Natural killer cell (primary cell): ENCODE measurements at regions of chr7 and their contacts with region 1.

Region 1: GRCh38 chr7:74094224-74095101 is 10.9 kb downstream of the LIMK1 start:
- DNase-seq: peak; percentile 81 to 85
- ATAC-seq: peak; percentile 74 to 90 (median 82)
- H3K4me3 ChIP-seq: peak overlapping the region; percentile 51
- H3K4me3 Mint-ChIP-seq: peak overlapping the region; percentile 89
- H3K27ac ChIP-seq: peak overlapping the region; percentile 99
- H3K27ac Mint-ChIP-seq: peak overlapping the region; percentile 98 to 99
- H3K4me1 ChIP-seq: peaks cover 46% of the 10 kb centered on the region
- H3K4me1 Mint-ChIP-seq: peaks cover 13 to 47% of the 10 kb centered on the region in 2 donors
- H3K27me3 ChIP-seq: no peaks in the 10 kb centered on the region
- H3K27me3 Mint-ChIP-seq: no peaks in the 10 kb centered on the region
- CTCF ChIP-seq: no peak

Region 2: DNA sequence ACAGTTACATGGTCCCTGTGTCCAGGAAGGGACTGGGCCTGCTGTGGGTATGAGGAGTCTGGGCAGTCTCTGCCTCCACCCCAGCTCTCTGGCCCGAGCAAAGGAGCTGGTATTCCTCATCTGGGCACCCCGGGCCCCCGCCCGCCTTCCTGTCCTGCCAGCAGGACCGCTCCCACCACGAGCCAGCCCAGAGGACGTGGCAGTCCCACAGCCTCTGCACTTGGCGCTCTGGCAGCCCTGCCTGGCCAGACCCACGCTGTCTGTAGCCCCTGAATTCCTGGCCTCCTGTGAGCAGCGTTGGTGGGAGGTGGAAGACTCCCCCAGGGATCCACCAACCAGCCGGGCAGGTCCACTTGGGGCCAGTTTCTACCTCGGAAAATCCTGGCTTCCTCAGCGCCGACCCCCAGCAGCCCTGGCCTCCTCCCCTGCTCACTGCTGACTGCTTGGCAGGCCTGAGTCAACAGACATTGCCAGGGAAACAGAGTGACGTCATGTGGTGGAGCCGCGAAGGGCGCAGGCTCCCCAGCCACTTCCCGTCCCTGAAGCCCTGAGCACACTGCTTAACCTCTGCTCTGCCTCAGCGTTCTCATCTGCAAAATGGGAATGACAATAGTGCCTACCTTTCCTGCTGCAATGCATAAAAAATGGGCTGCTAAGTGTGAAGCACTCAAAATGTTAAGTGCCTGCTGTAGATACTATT is 32.5 kb before region 1 on chr7:
- intact Hi-C with region 1: loop called (anchors 1 kb)
- DNase-seq: peak; percentile 84 to 86
- ATAC-seq: peak; percentile 95 to 99 (median 95)
- H3K4me3 ChIP-seq: peak overlapping the region; percentile 21
- H3K4me3 Mint-ChIP-seq: peak overlapping the region; percentile 86
- H3K27ac ChIP-seq: peak overlapping the region; percentile 91
- H3K27ac Mint-ChIP-seq: peak overlapping the region; percentile 99 to 100
- H3K4me1 ChIP-seq: peaks cover 21% of the 10 kb centered on the region
- H3K4me1 Mint-ChIP-seq: peaks cover 8 to 18% of the 10 kb centered on the region in 2 donors
- H3K27me3 ChIP-seq: no peaks in the 10 kb centered on the region
- H3K27me3 Mint-ChIP-seq: peaks cover 0 to 3% of the 10 kb centered on the region in 2 donors
- CTCF ChIP-seq: no peak

Region 3: GRCh38 chr7:74083117-74083876 is 11.2 kb before region 1 on chr7 and contains the start of gene LIMK1:
- intact Hi-C with region 1: loop called (anchors 1 kb)
- DNase-seq: peak; percentile 84 to 91
- ATAC-seq: peak; percentile 96 to 99 (median 97)
- H3K4me3 ChIP-seq: peak within 1 kb of the TSS; percentile 56
- H3K4me3 Mint-ChIP-seq: peak within 1 kb of the TSS; percentile 83
- H3K27ac ChIP-seq: no peak within 1 kb of the TSS
- H3K27ac Mint-ChIP-seq: peak within 1 kb of the TSS; percentile 23 to 86
- H3K4me1 ChIP-seq: peaks cover 17% of the 10 kb centered on the region
- H3K4me1 Mint-ChIP-seq: peaks cover 11 to 17% of the 10 kb centered on the region in 2 donors
- H3K27me3 ChIP-seq: no peaks in the 10 kb centered on the region
- H3K27me3 Mint-ChIP-seq: no peaks in the 10 kb centered on the region
- CTCF ChIP-seq: no peak
- total RNA-seq, gene LIMK1: 54.0 to 66.0 (median 55.0) TPM

Region 4: DNA sequence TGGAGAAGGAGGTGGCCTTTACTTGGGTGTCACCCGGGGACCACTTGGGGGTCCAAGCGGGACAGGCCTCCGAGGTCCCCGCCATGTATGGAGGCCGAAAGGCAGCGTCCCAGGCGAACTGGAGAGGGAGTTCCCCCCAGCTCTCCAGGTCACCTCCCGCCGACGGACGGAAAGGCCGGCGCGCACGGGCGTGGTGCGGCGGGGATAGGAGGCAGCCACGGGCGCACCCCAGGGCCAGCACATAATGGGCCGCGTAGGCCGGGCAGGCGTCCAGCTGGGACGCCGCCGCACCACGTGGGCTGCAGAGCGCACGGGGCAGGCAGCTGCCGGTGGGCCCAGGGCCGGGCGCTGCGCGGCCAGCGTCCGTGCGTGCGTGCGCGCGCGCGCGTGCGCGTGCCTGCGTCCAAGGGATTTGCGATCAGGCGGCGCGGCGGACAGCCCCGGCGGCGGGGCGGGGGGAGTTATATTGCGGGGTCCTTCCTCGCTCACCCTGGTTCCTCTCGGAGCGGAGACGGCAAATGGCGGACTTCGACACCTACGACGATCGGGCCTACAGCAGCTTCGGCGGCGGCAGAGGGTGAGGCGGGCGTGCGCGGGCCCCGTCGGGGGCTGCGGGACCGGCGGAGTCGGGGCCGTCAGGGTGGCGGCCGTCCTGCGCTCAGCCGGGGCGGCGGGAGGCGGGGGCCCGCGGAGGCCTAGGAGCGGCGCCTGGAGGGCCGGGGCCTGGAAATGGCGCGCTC is 79.6 kb after region 1 on chr7 and contains the start of gene EIF4H:
- intact Hi-C with region 1: loop called (anchors 5 kb)
- DNase-seq: peak; percentile 97 to 98
- ATAC-seq: peak; percentile 86 to 97 (median 88)
- H3K4me3 ChIP-seq: peak within 1 kb of the TSS; percentile 79
- H3K4me3 Mint-ChIP-seq: peak within 1 kb of the TSS; percentile 95
- H3K27ac ChIP-seq: peak within 1 kb of the TSS; percentile 89
- H3K27ac Mint-ChIP-seq: peak within 1 kb of the TSS; percentile 91 to 92
- H3K4me1 ChIP-seq: peaks cover 32% of the 10 kb centered on the region
- H3K4me1 Mint-ChIP-seq: peaks cover 38% of the 10 kb centered on the region in 2 donors
- H3K27me3 ChIP-seq: no peaks in the 10 kb centered on the region
- H3K27me3 Mint-ChIP-seq: no peaks in the 10 kb centered on the region
- CTCF ChIP-seq: no peak
- total RNA-seq, gene EIF4H: 286 to 294 (median 294) TPM

Region 5: DNA sequence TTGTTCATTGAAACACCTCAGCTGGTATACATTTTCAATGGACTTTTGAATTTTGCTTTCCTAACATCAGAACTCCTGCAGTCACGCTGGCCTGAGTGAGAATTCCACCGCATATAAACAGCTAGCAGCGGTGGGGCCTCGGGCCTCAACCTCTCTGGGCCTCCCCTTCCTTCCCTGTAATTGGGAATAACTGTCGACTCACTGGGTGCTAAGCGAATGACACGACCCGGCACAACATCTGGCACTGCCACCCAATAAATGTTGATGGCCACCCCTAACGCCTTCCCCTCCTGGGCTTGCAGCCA is 978.5 kb after region 1 on chr7:
- intact Hi-C with region 1: no loop called
- DNase-seq: no peak
- ATAC-seq: no peak
- H3K4me3 ChIP-seq: peak overlapping the region; percentile 89
- H3K4me3 Mint-ChIP-seq: peak overlapping the region; percentile 96
- H3K27ac ChIP-seq: peak overlapping the region; percentile 91
- H3K27ac Mint-ChIP-seq: peak overlapping the region; percentile 91 to 94
- H3K4me1 ChIP-seq: peaks cover 13% of the 10 kb centered on the region
- H3K4me1 Mint-ChIP-seq: peaks cover 3 to 16% of the 10 kb centered on the region in 2 donors
- H3K27me3 ChIP-seq: no peaks in the 10 kb centered on the region
- H3K27me3 Mint-ChIP-seq: no peaks in the 10 kb centered on the region
- CTCF ChIP-seq: no peak